Calu3 (cell line): ENCODE measurements at regions of chr17 and their contacts with region 1.

Region 1: DNA sequence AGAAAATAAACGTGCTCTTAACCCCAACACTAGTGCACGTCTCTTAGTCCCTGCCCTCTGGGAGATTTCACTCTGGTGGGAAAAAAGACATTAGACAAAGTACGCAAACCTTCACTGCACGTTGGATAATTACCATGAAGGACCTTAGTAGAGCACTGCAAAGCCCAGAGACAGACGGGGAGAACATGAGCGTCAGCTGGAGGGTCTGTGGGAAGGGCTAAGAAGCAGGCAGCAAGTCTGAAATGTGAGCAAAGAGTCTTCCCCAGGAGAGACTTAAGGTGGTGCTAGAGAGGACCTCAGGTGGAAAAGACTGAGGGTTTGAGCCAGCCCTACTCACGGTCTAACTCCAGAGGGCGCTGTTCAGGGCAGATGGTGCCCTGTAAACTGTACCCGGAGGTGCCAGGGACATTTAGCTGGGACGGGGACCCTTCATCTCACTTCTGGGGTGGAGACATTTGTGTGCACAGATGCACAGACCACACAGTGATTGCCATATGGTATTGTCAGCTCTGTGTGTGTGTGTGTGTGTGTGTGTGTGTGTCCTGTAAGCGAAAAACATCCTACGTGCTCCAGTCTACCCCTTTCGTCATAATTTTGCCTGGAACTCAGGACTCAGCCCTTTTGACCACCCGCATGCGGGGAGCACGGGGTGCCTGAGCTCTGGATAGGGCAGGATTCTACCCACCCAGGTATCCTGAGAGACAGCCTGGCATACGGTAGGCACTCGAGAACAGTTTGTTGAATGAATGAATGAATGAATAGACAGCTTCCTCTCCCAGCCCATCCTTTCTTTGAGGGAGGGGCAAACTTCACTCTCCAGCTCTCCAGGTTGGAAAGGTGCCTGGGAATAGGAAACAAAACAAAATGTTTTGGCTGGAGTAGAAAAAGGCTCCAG is 10.1 kb upstream of the STAC2 start:
- DNase-seq: peak; percentile 88
- H3K4me3 Mint-ChIP-seq: no peak overlapping the region
- H3K27ac Mint-ChIP-seq: no peak overlapping the region
- H3K4me1 Mint-ChIP-seq: peaks cover 49% of the 10 kb centered on the region
- H3K27me3 Mint-ChIP-seq: peaks cover 28% of the 10 kb centered on the region
- CTCF ChIP-seq: peak; percentile 100

Region 2: DNA sequence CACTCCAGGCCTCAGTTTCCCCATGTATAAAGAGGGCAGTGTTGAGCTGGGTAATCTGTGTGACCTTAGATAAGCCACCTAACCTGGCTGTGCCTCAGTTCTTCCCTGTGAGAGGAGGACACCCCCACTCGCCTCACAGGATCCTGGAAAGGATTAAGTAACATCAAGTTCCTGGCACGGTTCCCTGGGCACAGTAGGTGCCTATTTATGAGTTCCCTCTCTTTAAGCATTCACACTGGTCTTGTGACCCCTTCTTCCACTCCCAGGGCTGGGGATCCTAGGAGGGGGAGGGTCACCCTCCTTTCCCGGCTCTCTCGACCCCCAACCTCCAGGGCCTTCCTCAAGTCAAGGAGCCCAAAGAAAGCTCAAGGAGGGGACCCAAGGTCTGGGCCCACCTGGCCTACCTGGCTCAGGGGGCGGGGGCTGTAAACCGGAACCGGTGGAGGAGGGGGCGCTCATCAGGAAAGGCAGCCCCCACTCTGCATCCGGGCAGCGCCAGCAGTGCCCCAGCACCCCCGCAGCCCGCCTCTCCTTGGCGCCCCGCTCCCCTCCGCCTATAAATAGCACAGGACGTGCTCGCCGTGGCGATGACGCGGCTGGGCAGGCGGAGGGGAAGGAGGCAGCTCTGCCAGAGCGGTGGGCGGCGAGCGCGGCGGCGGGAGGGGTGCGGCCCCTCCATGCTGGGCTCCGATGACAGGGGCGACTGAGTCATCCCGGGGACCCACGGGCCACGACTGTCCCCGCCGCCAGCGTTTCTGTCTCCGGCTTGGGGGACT is 26.3 kb before region 1 on chr17:
- CTCF ChIA-PET with region 1: interaction called, 442 read pairs
- intact Hi-C with region 1: loop called (anchors 1 kb)
- DNase-seq: peak; percentile 81
- H3K4me3 Mint-ChIP-seq: peak overlapping the region; percentile 55
- H3K27ac Mint-ChIP-seq: peak overlapping the region; percentile 16
- H3K4me1 Mint-ChIP-seq: peaks cover 43% of the 10 kb centered on the region
- H3K27me3 Mint-ChIP-seq: peaks cover 63% of the 10 kb centered on the region
- CTCF ChIP-seq: peak; percentile 13

Region 3: GRCh38 chr17:39219647-39220154 is 16.1 kb before region 1 on chr17:
- CTCF ChIA-PET with region 1: interaction called, 22 read pairs
- intact Hi-C with region 1: no loop called
- DNase-seq: no peak
- H3K4me3 Mint-ChIP-seq: no peak overlapping the region
- H3K27ac Mint-ChIP-seq: no peak overlapping the region
- H3K4me1 Mint-ChIP-seq: no peaks in the 10 kb centered on the region
- H3K27me3 Mint-ChIP-seq: peaks cover 87% of the 10 kb centered on the region
- CTCF ChIP-seq: no peak

Region 4: GRCh38 chr17:39722965-39723848 is 487.4 kb after region 1 on chr17:
- CTCF ChIA-PET with region 1: no interaction called
- intact Hi-C with region 1: no loop called
- DNase-seq: peak; percentile 75
- H3K4me3 Mint-ChIP-seq: peak overlapping the region; percentile 0
- H3K27ac Mint-ChIP-seq: peak overlapping the region; percentile 28
- H3K4me1 Mint-ChIP-seq: peaks cover 38% of the 10 kb centered on the region
- H3K27me3 Mint-ChIP-seq: no peaks in the 10 kb centered on the region
- CTCF ChIP-seq: no peak